ENCODE measurements at regions of chr19 and their contacts with region 1.

Region 1: GRCh38 chr19:20077791-20078463 is at the start of gene ZNF90:
- DNase-seq: peak; percentile 78 to 93 (median 86)
- H3K4me3 ChIP-seq: peak within 1 kb of the TSS; percentile 85
- H3K4me3 Mint-ChIP-seq: peak within 1 kb of the TSS; percentile 82 to 95 (median 91)
- H3K27ac ChIP-seq: no peak within 1 kb of the TSS
- H3K27ac Mint-ChIP-seq: peak within 1 kb of the TSS in 6 of 8 donors; percentile 7 to 84 (median 33)
- H3K4me1 ChIP-seq: peaks cover 9% of the 10 kb centered on the region
- H3K4me1 Mint-ChIP-seq: peaks cover 19 to 25% (median 24%) of the 10 kb centered on the region in 3 donors
- H3K27me3 ChIP-seq: no peaks in the 10 kb centered on the region
- H3K27me3 Mint-ChIP-seq: peaks cover 0 to 2% of the 10 kb centered on the region in 2 donors
- total RNA-seq, gene ZNF90: 11.9 to 12.8 TPM

Region 2: GRCh38 chr19:20005766-20006165 is 72.2 kb before region 1 on chr19:
- CTCF ChIA-PET with region 1: no interaction called
- POLR2A ChIA-PET with region 1: no interaction called
- DNase-seq: no peak
- H3K4me3 ChIP-seq: no peak overlapping the region
- H3K4me3 Mint-ChIP-seq: no peak overlapping the region
- H3K27ac ChIP-seq: no peak overlapping the region
- H3K27ac Mint-ChIP-seq: no peak overlapping the region
- H3K4me1 ChIP-seq: no peaks in the 10 kb centered on the region
- H3K4me1 Mint-ChIP-seq: peaks cover 0 to 4% (median 0%) of the 10 kb centered on the region in 3 donors
- H3K27me3 ChIP-seq: no peaks in the 10 kb centered on the region
- H3K27me3 Mint-ChIP-seq: no peaks in the 10 kb centered on the region

Region 3: DNA sequence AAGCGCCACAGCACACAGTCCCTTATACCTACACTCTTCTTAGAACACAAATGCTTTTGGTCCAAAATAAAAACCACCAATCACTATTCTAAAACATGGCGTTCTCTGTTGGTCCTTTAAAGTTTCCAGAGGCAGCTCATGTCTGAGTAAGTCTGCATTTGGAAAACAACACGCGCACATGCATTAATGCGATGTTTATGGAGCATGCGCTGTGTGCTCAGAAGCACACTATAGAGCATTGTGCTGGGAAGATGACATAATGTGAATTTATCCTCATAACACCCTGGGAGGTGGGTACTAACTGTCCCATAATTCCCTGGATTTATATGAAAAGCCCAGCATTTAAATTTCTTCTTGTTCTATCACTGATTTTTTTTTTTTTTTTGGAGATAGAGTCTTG is 49.3 kb before region 1 on chr19:
- CTCF ChIA-PET with region 1: no interaction called
- POLR2A ChIA-PET with region 1: no interaction called
- DNase-seq: no peak
- H3K4me3 ChIP-seq: no peak overlapping the region
- H3K4me3 Mint-ChIP-seq: no peak overlapping the region
- H3K27ac ChIP-seq: no peak overlapping the region
- H3K27ac Mint-ChIP-seq: peak overlapping the region in 1 of 8 donors; percentile 50
- H3K4me1 ChIP-seq: no peaks in the 10 kb centered on the region
- H3K4me1 Mint-ChIP-seq: no peaks in the 10 kb centered on the region
- H3K27me3 ChIP-seq: no peaks in the 10 kb centered on the region
- H3K27me3 Mint-ChIP-seq: no peaks in the 10 kb centered on the region

Region 4: DNA sequence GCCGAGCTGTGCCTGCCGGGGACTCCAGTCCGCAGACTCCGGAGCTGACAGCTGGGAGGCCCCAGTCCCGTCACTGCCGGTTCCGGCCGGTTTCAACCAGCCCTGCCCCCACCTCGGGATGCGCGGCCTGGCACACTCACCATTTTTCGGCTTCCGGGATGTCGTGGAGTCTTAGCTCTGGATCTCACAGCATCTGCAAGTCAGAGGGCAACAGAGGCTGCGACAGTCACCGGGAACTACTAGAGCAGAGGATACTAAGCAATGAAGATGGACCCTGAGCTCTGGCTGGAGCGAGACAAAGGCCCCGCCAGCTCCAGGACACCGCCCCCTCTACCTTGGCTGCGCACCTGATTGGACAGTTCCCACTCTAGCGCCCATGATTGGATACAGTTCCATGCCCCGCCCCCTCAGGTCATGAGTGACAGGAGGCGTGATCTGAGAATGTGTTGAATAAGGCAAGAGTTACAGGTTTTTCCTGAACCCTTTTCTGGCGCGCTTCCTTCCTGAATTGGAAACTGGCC is 38.7 kb before region 1 on chr19 and contains the start of gene ZNF682:
- CTCF ChIA-PET with region 1: no interaction called
- POLR2A ChIA-PET with region 1: interaction called, 12 read pairs
- DNase-seq: peak; percentile 91 to 97 (median 93)
- H3K4me3 ChIP-seq: peak within 1 kb of the TSS; percentile 91
- H3K4me3 Mint-ChIP-seq: peak within 1 kb of the TSS; percentile 95 to 98 (median 97)
- H3K27ac ChIP-seq: peak within 1 kb of the TSS; percentile 55
- H3K27ac Mint-ChIP-seq: peak within 1 kb of the TSS; percentile 72 to 98 (median 94)
- H3K4me1 ChIP-seq: peaks cover 11% of the 10 kb centered on the region
- H3K4me1 Mint-ChIP-seq: peaks cover 14 to 25% (median 16%) of the 10 kb centered on the region in 3 donors
- H3K27me3 ChIP-seq: no peaks in the 10 kb centered on the region
- H3K27me3 Mint-ChIP-seq: peaks cover 0 to 8% of the 10 kb centered on the region in 2 donors
- total RNA-seq, gene ZNF682: 9.6 to 10.3 TPM

Region 5: DNA sequence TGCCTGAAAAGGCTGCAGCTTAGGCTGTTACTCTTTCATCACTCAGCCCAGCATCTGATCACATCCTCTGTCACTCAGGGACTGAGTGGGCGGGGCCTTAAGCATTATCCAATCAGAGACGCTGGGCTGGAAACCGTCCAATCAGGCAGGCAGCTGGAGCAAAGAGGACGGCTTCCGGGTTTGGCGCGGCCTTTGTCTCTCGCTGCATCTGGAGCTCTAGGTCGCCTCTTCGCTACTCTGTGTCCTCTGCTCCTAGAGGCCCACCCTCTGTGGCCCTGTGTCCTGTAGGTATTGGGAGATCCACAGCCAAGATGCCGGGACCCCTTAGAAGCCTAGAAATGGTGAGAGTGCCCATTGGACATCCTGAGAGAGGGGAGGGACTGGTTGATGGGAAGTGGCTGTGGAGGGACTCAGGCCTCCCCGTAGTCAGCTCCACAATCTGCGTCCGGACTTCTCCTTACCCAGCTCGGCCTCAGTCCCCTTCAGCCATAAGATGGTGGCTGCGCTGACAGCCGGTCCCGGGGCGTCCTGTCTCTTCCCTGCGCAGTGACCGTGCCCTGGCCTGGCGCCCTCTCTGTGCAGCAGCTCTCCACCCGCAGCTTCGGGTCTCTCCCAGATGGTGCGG is 89.2 kb after region 1 on chr19 and contains the start of gene ZNF486:
- CTCF ChIA-PET with region 1: interaction called, 3 read pairs
- POLR2A ChIA-PET with region 1: interaction called, 12 read pairs
- DNase-seq: peak; percentile 86 to 97 (median 91)
- H3K4me3 ChIP-seq: peak within 1 kb of the TSS; percentile 96
- H3K4me3 Mint-ChIP-seq: peak within 1 kb of the TSS; percentile 94 to 99 (median 97)
- H3K27ac ChIP-seq: peak within 1 kb of the TSS; percentile 71
- H3K27ac Mint-ChIP-seq: peak within 1 kb of the TSS; percentile 58 to 99 (median 94)
- H3K4me1 ChIP-seq: peaks cover 13% of the 10 kb centered on the region
- H3K4me1 Mint-ChIP-seq: peaks cover 44 to 73% (median 44%) of the 10 kb centered on the region in 3 donors
- H3K27me3 ChIP-seq: no peaks in the 10 kb centered on the region
- H3K27me3 Mint-ChIP-seq: peaks cover 0 to 1% of the 10 kb centered on the region in 2 donors
- total RNA-seq, gene ZNF486: 10.5 to 12.0 TPM

Region 6: GRCh38 chr19:20237761-20238623 is 160.1 kb after region 1 on chr19:
- CTCF ChIA-PET with region 1: no interaction called
- POLR2A ChIA-PET with region 1: interaction called, 10 read pairs
- DNase-seq: peak; percentile 75 to 92 (median 83)
- H3K4me3 ChIP-seq: peak overlapping the region; percentile 75
- H3K4me3 Mint-ChIP-seq: peak overlapping the region; percentile 94 to 99 (median 98)
- H3K27ac ChIP-seq: no peak overlapping the region
- H3K27ac Mint-ChIP-seq: peak overlapping the region; percentile 37 to 97 (median 92)
- H3K4me1 ChIP-seq: peaks cover 5% of the 10 kb centered on the region
- H3K4me1 Mint-ChIP-seq: peaks cover 11 to 16% (median 12%) of the 10 kb centered on the region in 3 donors
- H3K27me3 ChIP-seq: no peaks in the 10 kb centered on the region
- H3K27me3 Mint-ChIP-seq: no peaks in the 10 kb centered on the region

Measured in CD8-positive, alpha-beta memory T cell (primary cell).